ENCODE measurements at regions of chr2 and their contacts with region 1.

Region 1: DNA sequence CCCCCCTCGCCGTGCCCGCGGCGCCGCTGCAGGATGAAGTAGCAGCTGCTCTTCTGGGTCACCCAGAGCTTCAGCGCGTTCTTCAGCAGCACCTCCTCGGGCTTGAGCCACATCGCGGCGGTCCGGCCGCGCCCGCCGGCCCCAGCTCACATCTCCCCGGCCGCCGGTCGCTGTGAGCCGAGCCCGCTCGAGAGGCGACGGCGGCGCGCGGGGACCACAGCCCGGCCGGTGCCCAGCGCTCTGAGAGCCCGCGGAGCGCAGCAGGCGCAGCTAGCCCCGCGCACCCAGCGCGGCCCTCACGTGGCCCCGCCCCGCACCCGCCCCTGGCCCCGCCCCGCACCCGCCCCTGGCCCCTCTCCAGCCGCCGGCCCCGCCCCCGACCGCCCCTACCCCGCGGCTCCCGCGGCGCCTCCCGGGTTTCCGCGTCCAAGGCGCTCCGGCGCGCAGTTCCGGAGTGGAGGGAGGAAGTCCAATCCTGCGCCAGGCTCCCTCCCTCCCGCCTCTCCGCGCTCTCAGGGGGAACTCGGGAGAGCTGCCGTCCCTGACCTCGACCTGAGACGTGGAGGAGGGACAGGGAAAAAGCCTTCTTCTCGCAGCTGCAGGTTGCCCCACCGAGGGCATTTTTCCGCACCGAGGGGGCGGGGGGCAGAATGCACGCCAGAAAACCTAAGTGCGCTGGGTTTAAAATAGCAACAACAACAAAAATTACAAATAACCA is at the start of gene TBC1D8:
- H3K4me3 Mint-ChIP-seq: peak within 1 kb of the TSS; percentile 91
- H3K27ac Mint-ChIP-seq: peak within 1 kb of the TSS; percentile 79
- H3K4me1 Mint-ChIP-seq: peaks cover 46% of the 10 kb centered on the region
- H3K27me3 Mint-ChIP-seq: peaks cover 17% of the 10 kb centered on the region

Region 2: GRCh38 chr2:100529900-100530299 is 621.4 kb before region 1 on chr2:
- intact Hi-C with region 1: no loop called
- H3K4me3 Mint-ChIP-seq: no peak overlapping the region
- H3K27ac Mint-ChIP-seq: no peak overlapping the region
- H3K4me1 Mint-ChIP-seq: no peaks in the 10 kb centered on the region
- H3K27me3 Mint-ChIP-seq: peaks cover 15% of the 10 kb centered on the region

Region 3: DNA sequence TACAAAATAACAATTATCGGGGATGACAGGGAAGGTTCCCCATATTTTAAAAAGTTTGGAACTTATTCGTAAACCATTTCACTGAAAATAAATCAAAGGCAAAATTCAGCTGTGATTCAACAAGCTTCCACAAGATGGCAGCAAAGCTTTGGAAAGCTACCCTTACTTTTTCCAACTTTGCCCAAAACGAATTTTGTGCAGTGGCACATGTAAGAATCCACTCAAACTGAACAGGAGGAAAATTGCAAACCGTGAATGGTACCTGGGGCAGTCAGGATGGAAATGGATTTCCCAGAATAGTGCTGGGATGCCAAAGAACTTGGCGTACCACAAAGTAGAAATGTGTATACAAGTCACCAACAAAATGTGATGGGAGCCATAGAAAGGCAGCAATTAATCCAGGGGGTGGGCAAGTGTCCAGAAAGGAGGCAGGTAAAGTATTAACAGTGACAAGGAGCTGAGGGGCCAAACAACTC is 138.6 kb before region 1 on chr2:
- intact Hi-C with region 1: loop called (anchors 2 kb)
- H3K4me3 Mint-ChIP-seq: no peak overlapping the region
- H3K27ac Mint-ChIP-seq: peak overlapping the region; percentile 39
- H3K4me1 Mint-ChIP-seq: peaks cover 34% of the 10 kb centered on the region
- H3K27me3 Mint-ChIP-seq: no peaks in the 10 kb centered on the region

Region 4: DNA sequence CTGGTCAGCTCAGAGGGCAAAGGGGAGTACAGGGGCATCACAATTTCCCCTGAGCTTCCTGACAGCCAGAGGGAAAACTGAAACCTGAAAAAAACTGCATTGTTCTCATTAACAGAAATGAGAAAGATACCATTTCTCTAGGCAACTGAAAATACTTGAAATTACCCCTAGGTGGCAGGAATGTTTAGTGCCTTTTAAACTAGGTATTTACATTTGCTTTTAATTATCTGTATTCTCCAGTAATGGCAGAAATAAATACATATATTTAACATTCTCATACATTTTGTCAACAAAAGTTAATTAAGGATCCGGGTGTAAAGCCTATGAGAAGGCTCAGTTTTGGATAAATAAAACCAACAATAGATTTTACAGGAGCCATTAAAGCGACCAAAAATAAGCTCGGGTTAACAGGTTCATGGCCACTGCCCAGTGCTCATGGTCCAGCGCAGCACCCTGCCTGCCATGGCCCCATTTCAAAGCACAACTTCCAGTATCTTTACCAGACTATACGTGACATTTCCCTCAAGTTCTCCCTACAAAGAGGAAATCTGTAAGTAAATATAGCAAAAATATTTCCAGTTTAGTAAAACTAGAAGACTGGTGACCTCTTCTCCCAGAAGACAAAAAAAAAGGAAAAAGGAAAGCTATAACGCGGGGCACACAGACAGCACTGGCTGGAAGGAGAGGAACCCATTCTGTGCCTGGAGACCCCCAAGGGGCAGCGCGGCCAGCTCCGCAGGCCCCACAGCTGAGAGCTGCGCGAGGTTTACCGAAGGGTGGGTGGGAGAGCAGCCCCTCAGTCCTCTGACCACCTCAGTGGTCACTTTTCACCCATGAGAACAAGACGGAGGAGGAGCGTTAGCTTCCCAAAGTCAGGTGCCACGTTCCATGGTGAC is 114.5 kb before region 1 on chr2:
- intact Hi-C with region 1: loop called (anchors 5 kb)
- H3K4me3 Mint-ChIP-seq: no peak overlapping the region
- H3K27ac Mint-ChIP-seq: no peak overlapping the region
- H3K4me1 Mint-ChIP-seq: peaks cover 29% of the 10 kb centered on the region
- H3K27me3 Mint-ChIP-seq: no peaks in the 10 kb centered on the region

Region 5: GRCh38 chr2:101190747-101191516 is 39.6 kb after region 1 on chr2:
- intact Hi-C with region 1: loop called (anchors 5 kb)
- H3K4me3 Mint-ChIP-seq: peak overlapping the region; percentile 66
- H3K27ac Mint-ChIP-seq: peak overlapping the region; percentile 74
- H3K4me1 Mint-ChIP-seq: peaks cover 23% of the 10 kb centered on the region
- H3K27me3 Mint-ChIP-seq: peaks cover 2% of the 10 kb centered on the region

Region 6: DNA sequence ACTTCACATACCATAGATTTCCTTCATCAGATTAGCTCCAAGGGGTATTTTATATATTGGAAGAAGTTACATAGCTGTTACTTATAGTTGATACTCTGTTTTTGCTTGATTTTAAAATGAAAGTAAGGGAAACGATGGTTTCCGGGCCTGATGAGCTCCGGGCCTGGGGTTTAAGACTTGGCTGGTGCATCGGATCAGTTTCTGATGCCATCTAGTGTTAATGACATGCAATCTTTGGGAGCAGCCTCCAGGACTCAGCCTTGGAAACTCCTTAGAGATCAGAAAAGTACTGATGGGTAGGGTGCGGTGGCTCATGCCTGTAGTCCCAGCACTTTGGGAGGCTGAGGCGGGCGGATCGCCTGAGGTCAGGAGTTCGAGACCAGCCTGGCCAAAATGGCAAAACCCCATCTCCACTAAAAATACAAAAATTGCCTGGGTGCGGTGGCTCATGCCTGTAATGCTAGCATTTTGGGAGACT is 54.3 kb after region 1 on chr2:
- intact Hi-C with region 1: loop called (anchors 2 kb)
- H3K4me3 Mint-ChIP-seq: peak overlapping the region; percentile 13
- H3K27ac Mint-ChIP-seq: no peak overlapping the region
- H3K4me1 Mint-ChIP-seq: peaks cover 5% of the 10 kb centered on the region
- H3K27me3 Mint-ChIP-seq: no peaks in the 10 kb centered on the region